Heart left ventricle (tissue), 16 donors: ENCODE measurements at regions of chr11 and their contacts with region 1.

Region 1: GRCh38 chr11:65204646-65205601 is 23.2 kb downstream of the CAPN1 start:
- DNase-seq: peak in 1 of 5 donors; percentile 19
- ATAC-seq: peak in 3 of 4 donors; percentile 42 to 62 (median 45)
- H3K4me3 ChIP-seq: no peak overlapping the region
- H3K27ac ChIP-seq: no peak overlapping the region
- H3K4me1 ChIP-seq: no peaks in the 10 kb centered on the region
- H3K27me3 ChIP-seq: no peaks in the 10 kb centered on the region
- CTCF ChIP-seq: peak; percentile 68 to 96 (median 80)
- POLR2A ChIP-seq: no peak

Region 2: DNA sequence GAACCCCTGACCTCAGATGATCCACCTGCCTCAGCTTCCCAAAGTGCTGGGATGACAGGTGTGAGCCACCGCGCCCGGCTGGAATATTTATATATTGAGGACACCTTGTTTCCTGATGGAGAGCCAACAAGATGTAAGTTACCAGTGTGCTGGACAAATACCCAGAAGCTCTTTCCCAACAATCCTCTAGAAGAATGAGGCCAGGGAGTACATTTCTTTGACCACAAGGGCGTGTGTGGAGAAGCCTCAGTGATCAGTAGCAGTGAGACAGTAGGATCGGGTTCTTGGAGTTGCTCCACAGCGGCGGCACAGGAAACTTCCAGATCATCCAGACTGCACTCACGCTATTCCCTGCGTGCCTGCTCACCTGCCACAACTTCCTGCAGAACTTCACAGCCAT is 46.6 kb after region 1 on chr11:
- intact Hi-C with region 1: loop called in 2 of 10 experiments (anchors 5 to 10 kb)
- DNase-seq: no peak
- ATAC-seq: no peak
- H3K4me3 ChIP-seq: no peak overlapping the region
- H3K27ac ChIP-seq: no peak overlapping the region
- H3K4me1 ChIP-seq: no peaks in the 10 kb centered on the region
- H3K27me3 ChIP-seq: no peaks in the 10 kb centered on the region
- CTCF ChIP-seq: no peak
- POLR2A ChIP-seq: no peak